Breast epithelium (tissue), 4 donors: ENCODE measurements at regions of chr15 and their contacts with region 1.

Region 1: GRCh38 chr15:99504823-99505551 is 60.8 kb upstream of the MEF2A start:
- DNase-seq: no peak
- H3K4me3 ChIP-seq: no peak overlapping the region
- H3K27ac ChIP-seq: no peak overlapping the region
- H3K4me1 ChIP-seq: no peaks in the 10 kb centered on the region
- H3K27me3 ChIP-seq: no peaks in the 10 kb centered on the region
- CTCF ChIP-seq: no peak
- POLR2A ChIP-seq: no peak

Region 2: DNA sequence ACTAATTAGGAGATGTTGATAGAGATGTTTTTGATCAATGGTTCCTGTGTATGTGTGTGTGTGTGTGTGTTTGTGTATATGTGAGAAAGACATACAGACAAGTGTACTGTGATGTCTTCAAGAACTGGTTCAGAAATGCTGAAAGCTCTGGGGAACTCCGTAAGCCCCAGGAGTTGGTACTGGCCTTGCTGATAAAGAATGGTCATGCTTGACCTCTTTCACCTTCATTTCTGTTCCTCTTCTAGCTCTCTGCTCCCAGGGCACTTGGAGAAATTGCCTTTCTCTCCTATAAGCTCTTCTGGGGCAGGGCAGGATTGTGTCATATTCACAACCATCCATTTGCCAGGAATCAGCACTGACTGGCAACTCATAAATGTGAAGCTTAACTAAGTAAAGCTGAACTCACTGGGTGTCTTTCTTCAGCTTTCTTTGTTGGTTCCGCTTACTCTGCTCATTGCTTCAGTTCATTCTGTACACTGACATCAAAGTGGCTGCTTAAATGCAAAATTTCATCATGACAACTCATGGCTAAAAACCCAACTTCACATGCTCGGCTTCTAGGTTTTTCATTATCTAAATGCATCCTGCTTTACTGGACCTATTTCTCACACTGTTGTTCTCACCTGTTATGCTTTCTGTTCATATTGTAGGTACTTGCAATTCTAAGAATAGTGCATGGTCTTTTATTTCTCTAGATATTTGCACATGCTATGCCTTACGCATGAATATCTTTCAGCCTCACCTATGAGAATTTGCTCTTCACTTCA is 390.4 kb after region 1 on chr15:
- intact Hi-C with region 1: loop called (anchors 5 kb)
- DNase-seq: no peak
- H3K4me3 ChIP-seq: no peak overlapping the region
- H3K27ac ChIP-seq: no peak overlapping the region
- H3K4me1 ChIP-seq: no peaks in the 10 kb centered on the region
- H3K27me3 ChIP-seq: no peaks in the 10 kb centered on the region
- CTCF ChIP-seq: no peak
- POLR2A ChIP-seq: no peak